Endothelial cell of umbilical vein (primary cell): ENCODE measurements at regions of chr1 and their contacts with region 1.

Region 1: GRCh38 chr1:206663832-206664652 is 20.7 kb upstream of the MAPKAPK2 start:
- DNase-seq: peak; percentile 76
- H3K4me3 ChIP-seq: no peak overlapping the region
- H3K27ac ChIP-seq: no peak overlapping the region
- H3K4me1 ChIP-seq: no peaks in the 10 kb centered on the region
- H3K27me3 ChIP-seq: peaks cover 36 to 38% of the 10 kb centered on the region in 2 experiments
- CTCF ChIP-seq: peak; percentile 65 to 78
- POLR2A ChIP-seq: no peak

Region 2: GRCh38 chr1:206479183-206480125 is 184.6 kb before region 1 on chr1:
- CTCF ChIA-PET with region 1: interaction called, 44 read pairs
- POLR2A ChIA-PET with region 1: interaction called, 3 read pairs
- dilution Hi-C with region 1: no loop called
- intact Hi-C with region 1: loop called (anchors 2 kb)
- DNase-seq: peak; percentile 74
- H3K4me3 ChIP-seq: no peak overlapping the region
- H3K27ac ChIP-seq: no peak overlapping the region
- H3K4me1 ChIP-seq: no peaks in the 10 kb centered on the region
- H3K27me3 ChIP-seq: no peaks in the 10 kb centered on the region
- CTCF ChIP-seq: peak; percentile 76 to 77
- POLR2A ChIP-seq: no peak

Region 3: DNA sequence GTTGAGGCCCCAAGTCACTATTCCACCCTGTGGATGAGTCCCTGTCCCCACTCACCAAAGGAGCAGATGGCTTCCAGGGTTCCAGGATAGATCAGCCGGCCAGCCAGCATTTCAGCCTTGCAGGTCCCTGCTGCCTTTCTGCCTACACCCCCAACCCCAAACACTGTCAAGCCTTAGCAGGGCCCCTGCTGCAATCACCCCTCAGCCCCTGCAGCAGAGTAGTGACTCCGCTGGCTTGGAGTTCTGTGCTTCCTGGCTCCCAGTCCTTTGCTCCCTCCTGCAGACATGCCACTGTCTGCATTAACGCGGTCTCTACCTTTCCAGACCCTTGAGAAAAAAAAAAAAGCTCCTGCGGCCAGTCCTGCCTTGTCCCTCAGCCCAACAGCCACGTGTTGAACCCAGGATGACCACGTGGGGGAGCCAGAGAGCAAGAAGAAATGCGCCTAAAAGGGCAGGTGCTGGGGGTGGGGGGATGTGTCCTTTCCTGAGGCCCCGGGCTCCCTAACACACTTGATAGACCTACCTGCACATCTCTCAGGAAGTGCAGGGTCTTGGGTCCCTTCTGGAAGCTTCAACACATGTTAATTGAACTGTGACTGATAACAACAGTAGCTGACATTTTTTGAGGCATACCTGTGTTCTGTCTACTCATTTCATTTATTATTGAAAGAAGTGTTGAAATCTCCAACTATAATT is 119.3 kb before region 1 on chr1:
- CTCF ChIA-PET with region 1: interaction called, 25 read pairs
- POLR2A ChIA-PET with region 1: no interaction called
- dilution Hi-C with region 1: no loop called
- intact Hi-C with region 1: loop called (anchors 2 kb)
- DNase-seq: peak; percentile 64
- H3K4me3 ChIP-seq: no peak overlapping the region
- H3K27ac ChIP-seq: no peak overlapping the region
- H3K4me1 ChIP-seq: no peaks in the 10 kb centered on the region
- H3K27me3 ChIP-seq: peaks cover 4 to 19% of the 10 kb centered on the region in 2 experiments
- CTCF ChIP-seq: peak; percentile 82 to 92
- POLR2A ChIP-seq: no peak

Region 4: GRCh38 chr1:206612129-206612876 is 51.7 kb before region 1 on chr1 and contains the start of gene EIF2D:
- CTCF ChIA-PET with region 1: interaction called, 70 read pairs
- POLR2A ChIA-PET with region 1: no interaction called
- dilution Hi-C with region 1: no loop called
- intact Hi-C with region 1: loop called (anchors 1 kb)
- DNase-seq: peak; percentile 93
- H3K4me3 ChIP-seq: peak within 1 kb of the TSS; percentile 69 to 89 (median 85)
- H3K27ac ChIP-seq: peak within 1 kb of the TSS; percentile 78
- H3K4me1 ChIP-seq: peaks cover 7% of the 10 kb centered on the region
- H3K27me3 ChIP-seq: peaks cover 4 to 13% of the 10 kb centered on the region in 2 experiments
- CTCF ChIP-seq: peak; percentile 91 to 96
- POLR2A ChIP-seq: peak; percentile 96
- total RNA-seq, gene EIF2D: 47.6 and 48.0 TPM in 2 replicates

Region 5: DNA sequence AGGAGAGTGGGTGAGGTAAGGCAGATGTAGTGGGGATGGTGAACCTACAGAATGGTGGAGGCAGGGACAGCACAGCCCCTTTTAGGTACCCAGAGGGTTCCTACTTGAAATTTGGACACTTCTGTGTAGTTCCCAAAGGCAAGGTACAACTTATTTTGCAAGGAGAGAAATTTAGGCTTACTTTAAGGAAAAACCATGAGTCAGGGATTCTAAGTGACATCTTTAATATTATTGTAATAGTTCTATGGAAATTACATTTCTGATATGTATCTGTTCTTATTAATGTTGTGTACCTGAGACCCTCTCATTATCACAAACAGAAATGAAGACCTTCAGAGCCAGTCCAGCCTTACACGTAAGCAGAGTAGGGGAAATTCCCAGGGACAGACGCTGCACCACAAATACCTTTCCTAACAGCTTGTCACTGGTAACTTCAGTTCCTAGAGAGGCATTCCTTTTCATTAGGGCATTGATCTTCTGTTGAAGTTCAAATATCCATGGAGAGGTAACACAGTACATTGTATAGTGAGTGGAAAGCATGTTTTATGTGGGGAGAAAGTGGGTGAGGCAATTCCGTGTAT is 20.8 kb before region 1 on chr1:
- CTCF ChIA-PET with region 1: interaction called, 663 read pairs
- POLR2A ChIA-PET with region 1: no interaction called
- dilution Hi-C with region 1: no loop called
- intact Hi-C with region 1: no loop called
- DNase-seq: no peak
- H3K4me3 ChIP-seq: no peak overlapping the region
- H3K27ac ChIP-seq: no peak overlapping the region
- H3K4me1 ChIP-seq: no peaks in the 10 kb centered on the region
- H3K27me3 ChIP-seq: no peaks in the 10 kb centered on the region
- CTCF ChIP-seq: no peak
- POLR2A ChIP-seq: no peak

Region 6: DNA sequence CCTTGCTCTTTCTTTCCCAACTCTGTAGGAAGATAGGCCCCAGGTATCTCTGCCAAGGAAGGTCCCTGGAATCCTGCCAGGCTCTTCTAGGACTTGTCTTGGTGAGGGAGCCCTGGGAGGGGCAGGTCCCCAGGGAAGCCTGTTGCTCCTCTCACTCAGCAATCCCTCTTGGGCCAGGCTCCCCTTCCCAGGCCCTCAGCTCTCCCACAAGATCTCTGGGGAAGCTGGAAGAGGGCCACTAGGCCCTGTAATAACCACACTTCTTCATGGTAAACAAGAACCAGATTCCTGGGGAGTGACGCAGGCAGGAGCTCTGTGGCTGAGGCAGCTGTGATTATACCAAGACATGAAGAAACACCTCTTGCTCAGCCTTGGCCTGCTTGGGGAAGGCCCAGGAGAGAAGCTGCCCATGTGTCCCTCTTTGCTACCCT is 10.7 kb after region 1 on chr1:
- CTCF ChIA-PET with region 1: interaction called, 37 read pairs
- POLR2A ChIA-PET with region 1: no interaction called
- dilution Hi-C with region 1: no loop called
- intact Hi-C with region 1: no loop called
- DNase-seq: no peak
- H3K4me3 ChIP-seq: no peak overlapping the region
- H3K27ac ChIP-seq: no peak overlapping the region
- H3K4me1 ChIP-seq: peaks cover 10% of the 10 kb centered on the region
- H3K27me3 ChIP-seq: peaks cover 5 to 14% of the 10 kb centered on the region in 2 experiments
- CTCF ChIP-seq: no peak
- POLR2A ChIP-seq: no peak

Region 7: DNA sequence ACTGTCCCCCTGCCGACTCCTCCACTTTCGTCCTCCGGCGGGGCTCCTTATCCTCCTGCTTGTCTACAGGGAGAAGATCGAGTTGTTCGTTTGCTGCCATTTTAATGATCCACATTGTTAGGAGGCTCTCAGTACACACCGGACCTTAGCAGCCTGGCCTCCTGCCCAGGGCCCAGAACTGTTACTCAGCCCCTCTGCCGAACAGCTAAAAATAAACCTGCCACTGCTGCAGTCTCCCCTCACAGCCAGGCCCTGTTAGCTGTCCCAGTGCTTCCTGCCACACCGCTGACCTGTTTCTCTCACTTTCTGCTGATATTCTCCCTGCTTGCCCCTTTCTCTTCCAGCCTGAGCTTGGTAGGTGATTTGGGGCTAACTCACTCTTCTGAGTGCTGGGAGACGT is 29.0 kb after region 1 on chr1:
- CTCF ChIA-PET with region 1: interaction called, 10 read pairs
- POLR2A ChIA-PET with region 1: no interaction called
- dilution Hi-C with region 1: no loop called
- intact Hi-C with region 1: no loop called
- DNase-seq: peak; percentile 60
- H3K4me3 ChIP-seq: no peak overlapping the region
- H3K27ac ChIP-seq: no peak overlapping the region
- H3K4me1 ChIP-seq: peaks cover 37% of the 10 kb centered on the region
- H3K27me3 ChIP-seq: no peaks in the 10 kb centered on the region
- CTCF ChIP-seq: no peak
- POLR2A ChIP-seq: no peak